Kidney (tissue), 22 donors: ENCODE measurements at regions of chr11 and their contacts with region 1.

Region 1: GRCh38 chr11:33857933-33858371 is 33.9 kb downstream of the LMO2 start:
- DNase-seq: peak; percentile 82 to 90 (median 86)
- H3K4me3 ChIP-seq: no peak overlapping the region
- H3K27ac ChIP-seq: no peak overlapping the region
- H3K4me1 ChIP-seq: peaks cover 0 to 37% (median 16%) of the 10 kb centered on the region in 3 donors
- H3K27me3 ChIP-seq: no peaks in the 10 kb centered on the region
- CTCF ChIP-seq: peak; percentile 93

Region 2: DNA sequence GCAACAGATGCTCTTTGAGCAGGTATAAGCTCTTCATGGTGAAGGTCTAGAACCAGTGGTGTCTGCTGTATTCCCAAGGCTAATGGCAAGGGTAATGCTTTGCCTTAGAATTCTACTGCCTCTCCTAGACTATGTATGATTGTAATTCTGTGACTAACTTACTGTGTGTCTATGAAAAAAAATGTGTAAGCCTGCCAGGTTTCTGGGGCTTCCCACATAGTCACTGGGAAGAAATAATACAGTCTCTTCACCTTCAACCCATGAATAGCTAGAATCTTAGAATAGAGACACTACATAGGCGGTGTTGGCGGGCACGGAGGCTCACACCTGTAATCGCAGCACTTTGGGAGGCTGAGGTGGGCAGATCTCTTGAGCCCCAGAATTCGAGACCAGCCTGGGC is 241.4 kb before region 1 on chr11:
- intact Hi-C with region 1: no loop called
- DNase-seq: no peak
- H3K4me3 ChIP-seq: no peak overlapping the region
- H3K27ac ChIP-seq: no peak overlapping the region
- H3K4me1 ChIP-seq: no peaks in the 10 kb centered on the region
- H3K27me3 ChIP-seq: no peaks in the 10 kb centered on the region
- CTCF ChIP-seq: no peak

Region 3: GRCh38 chr11:33970984-33971466 is 113.1 kb after region 1 on chr11:
- intact Hi-C with region 1: loop called (anchors 5 kb)
- DNase-seq: peak in 4 of 5 donors; percentile 55 to 88 (median 68)
- H3K4me3 ChIP-seq: no peak overlapping the region
- H3K27ac ChIP-seq: no peak overlapping the region
- H3K4me1 ChIP-seq: peaks cover 0 to 4% (median 0%) of the 10 kb centered on the region in 3 donors
- H3K27me3 ChIP-seq: no peaks in the 10 kb centered on the region
- CTCF ChIP-seq: peak; percentile 81